CD8-positive, alpha-beta T cell (primary cell): ENCODE measurements at regions of chr9 and their contacts with region 1.

Region 1: DNA sequence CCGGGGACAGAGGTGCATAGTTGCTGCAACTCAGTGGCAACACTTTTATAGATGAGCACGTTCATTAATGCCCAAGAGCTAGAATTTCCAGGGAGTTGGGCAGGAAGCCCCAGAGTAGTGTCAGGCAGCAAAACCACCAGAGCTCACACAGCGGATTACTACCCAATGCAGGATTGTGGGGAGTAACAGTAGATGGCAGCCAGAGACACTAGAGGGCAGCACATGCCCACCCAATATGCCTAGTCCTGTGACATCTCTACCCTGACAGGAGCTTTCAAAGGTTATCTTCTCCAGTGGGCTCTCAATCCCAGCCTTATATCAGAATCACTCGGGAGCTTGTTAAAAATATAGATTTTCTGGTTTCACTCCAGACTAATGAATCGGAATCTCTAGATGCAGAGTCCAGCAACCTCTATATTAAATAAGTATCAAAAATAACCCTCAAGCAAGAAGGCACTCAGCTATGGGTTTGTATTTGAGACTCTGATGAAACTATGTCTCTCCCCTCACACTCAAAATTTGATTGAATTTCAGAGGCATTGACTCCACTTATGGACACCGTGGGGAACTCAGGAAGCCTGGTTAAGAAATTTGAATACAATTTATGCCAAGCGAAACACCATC is 58.4 kb upstream of the PHF24 start:
- DNase-seq: peak; percentile 64 to 87 (median 80)
- ATAC-seq: peak; percentile 99
- H3K4me3 ChIP-seq: no peak overlapping the region
- H3K4me3 Mint-ChIP-seq: no peak overlapping the region
- H3K27ac ChIP-seq: no peak overlapping the region
- H3K27ac Mint-ChIP-seq: no peak overlapping the region
- H3K4me1 ChIP-seq: no peaks in the 10 kb centered on the region
- H3K4me1 Mint-ChIP-seq: no peaks in the 10 kb centered on the region
- H3K27me3 ChIP-seq: no peaks in the 10 kb centered on the region
- H3K27me3 Mint-ChIP-seq: peaks cover 31% of the 10 kb centered on the region
- CTCF ChIP-seq: peak; percentile 81

Region 2: GRCh38 chr9:34957492-34958410 is 58.1 kb after region 1 on chr9 and contains the start of gene PHF24:
- CTCF ChIA-PET with region 1: interaction called, 8 read pairs
- POLR2A ChIA-PET with region 1: no interaction called
- intact Hi-C with region 1: loop called in 1 of 2 experiments (anchors 5 kb)
- DNase-seq: peak in 6 of 9 experiments; percentile 4 to 50 (median 36)
- ATAC-seq: peak; percentile 85
- H3K4me3 ChIP-seq: peak within 1 kb of the TSS in 1 of 2 experiments; percentile 35
- H3K4me3 Mint-ChIP-seq: peak within 1 kb of the TSS; percentile 75
- H3K27ac ChIP-seq: no peak within 1 kb of the TSS
- H3K27ac Mint-ChIP-seq: no peak within 1 kb of the TSS
- H3K4me1 ChIP-seq: peaks cover 4% of the 10 kb centered on the region
- H3K4me1 Mint-ChIP-seq: peaks cover 3% of the 10 kb centered on the region
- H3K27me3 ChIP-seq: peaks cover 12 to 18% of the 10 kb centered on the region in 2 experiments
- H3K27me3 Mint-ChIP-seq: peaks cover 48% of the 10 kb centered on the region
- CTCF ChIP-seq: no peak
- total RNA-seq, gene PHF24: not detected

Region 3: DNA sequence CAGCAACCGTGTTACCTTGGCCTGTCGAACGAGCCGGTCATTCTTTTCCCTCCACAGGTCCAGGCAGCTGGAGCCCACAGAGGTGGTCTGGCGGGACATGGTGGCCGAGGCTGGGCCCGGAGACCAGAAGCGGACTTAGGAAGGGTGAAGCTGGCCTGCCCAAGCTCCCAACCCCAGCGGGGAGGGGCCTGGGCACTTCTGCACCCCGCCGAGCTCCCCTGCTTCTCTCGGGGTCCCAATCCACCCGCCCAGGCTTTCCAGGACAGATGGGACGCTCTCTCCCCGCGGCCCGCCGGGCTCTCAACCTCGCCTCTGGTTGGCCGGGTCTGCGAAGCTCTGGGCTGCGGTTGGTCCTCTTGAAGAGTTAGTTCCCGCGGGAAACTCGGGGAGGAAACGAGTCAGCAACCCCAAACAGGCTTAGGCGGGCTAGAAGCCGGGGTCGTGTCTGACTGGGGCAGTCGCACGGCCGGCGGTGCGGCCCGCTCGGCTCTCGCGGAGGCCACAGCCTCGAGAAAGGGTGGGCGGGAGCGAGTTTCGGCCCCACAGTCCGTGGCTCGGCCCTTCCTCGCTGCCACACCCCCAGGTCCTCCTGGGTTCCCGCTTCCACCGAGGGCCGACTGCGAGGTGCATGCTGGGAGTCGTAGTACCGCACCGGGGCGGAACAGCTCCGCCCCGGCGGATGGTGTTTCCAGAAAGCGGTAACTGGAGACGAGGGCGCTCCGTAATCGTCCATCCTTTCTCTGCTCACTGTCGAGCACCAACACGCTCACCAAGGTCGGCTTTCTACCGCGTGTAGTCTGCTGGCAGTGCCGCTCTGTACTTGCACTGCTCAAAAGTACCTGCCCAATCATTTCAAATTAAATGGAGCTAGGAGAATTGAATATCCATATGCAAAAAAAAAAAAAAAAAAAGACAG is 180.0 kb after region 1 on chr9 and contains the start of gene FANCG:
- CTCF ChIA-PET with region 1: interaction called, 11 read pairs
- POLR2A ChIA-PET with region 1: interaction called, 7 read pairs
- intact Hi-C with region 1: no loop called
- DNase-seq: peak; percentile 30 to 88 (median 73)
- ATAC-seq: peak; percentile 92
- H3K4me3 ChIP-seq: peak within 1 kb of the TSS; percentile 65 to 81
- H3K4me3 Mint-ChIP-seq: peak within 1 kb of the TSS; percentile 92
- H3K27ac ChIP-seq: peak within 1 kb of the TSS; percentile 42 to 49
- H3K27ac Mint-ChIP-seq: peak within 1 kb of the TSS; percentile 84
- H3K4me1 ChIP-seq: peaks cover 15% of the 10 kb centered on the region
- H3K4me1 Mint-ChIP-seq: peaks cover 21% of the 10 kb centered on the region
- H3K27me3 ChIP-seq: no peaks in the 10 kb centered on the region
- H3K27me3 Mint-ChIP-seq: no peaks in the 10 kb centered on the region
- CTCF ChIP-seq: no peak
- total RNA-seq, gene FANCG: 15.2 to 19.4 TPM

Region 4: GRCh38 chr9:35258676-35259474 is 359.2 kb after region 1 on chr9:
- CTCF ChIA-PET with region 1: interaction called, 17 read pairs
- POLR2A ChIA-PET with region 1: no interaction called
- intact Hi-C with region 1: loop called in 1 of 2 experiments (anchors 2 kb)
- DNase-seq: peak in 8 of 9 experiments; percentile 7 to 62 (median 45)
- ATAC-seq: no peak
- H3K4me3 ChIP-seq: no peak overlapping the region
- H3K4me3 Mint-ChIP-seq: no peak overlapping the region
- H3K27ac ChIP-seq: no peak overlapping the region
- H3K27ac Mint-ChIP-seq: no peak overlapping the region
- H3K4me1 ChIP-seq: no peaks in the 10 kb centered on the region
- H3K4me1 Mint-ChIP-seq: no peaks in the 10 kb centered on the region
- H3K27me3 ChIP-seq: no peaks in the 10 kb centered on the region
- H3K27me3 Mint-ChIP-seq: peaks cover 8% of the 10 kb centered on the region
- CTCF ChIP-seq: peak; percentile 57

Region 5: GRCh38 chr9:35553670-35554543 is 654.3 kb after region 1 on chr9:
- CTCF ChIA-PET with region 1: interaction called, 13 read pairs
- POLR2A ChIA-PET with region 1: no interaction called
- intact Hi-C with region 1: loop called in 1 of 2 experiments (anchors 2 kb)
- DNase-seq: peak in 4 of 9 experiments; percentile 18 to 53 (median 31)
- ATAC-seq: peak; percentile 51
- H3K4me3 ChIP-seq: no peak overlapping the region
- H3K4me3 Mint-ChIP-seq: no peak overlapping the region
- H3K27ac ChIP-seq: no peak overlapping the region
- H3K27ac Mint-ChIP-seq: no peak overlapping the region
- H3K4me1 ChIP-seq: no peaks in the 10 kb centered on the region
- H3K4me1 Mint-ChIP-seq: no peaks in the 10 kb centered on the region
- H3K27me3 ChIP-seq: no peaks in the 10 kb centered on the region
- H3K27me3 Mint-ChIP-seq: peaks cover 2% of the 10 kb centered on the region
- CTCF ChIP-seq: peak; percentile 47

Region 6: DNA sequence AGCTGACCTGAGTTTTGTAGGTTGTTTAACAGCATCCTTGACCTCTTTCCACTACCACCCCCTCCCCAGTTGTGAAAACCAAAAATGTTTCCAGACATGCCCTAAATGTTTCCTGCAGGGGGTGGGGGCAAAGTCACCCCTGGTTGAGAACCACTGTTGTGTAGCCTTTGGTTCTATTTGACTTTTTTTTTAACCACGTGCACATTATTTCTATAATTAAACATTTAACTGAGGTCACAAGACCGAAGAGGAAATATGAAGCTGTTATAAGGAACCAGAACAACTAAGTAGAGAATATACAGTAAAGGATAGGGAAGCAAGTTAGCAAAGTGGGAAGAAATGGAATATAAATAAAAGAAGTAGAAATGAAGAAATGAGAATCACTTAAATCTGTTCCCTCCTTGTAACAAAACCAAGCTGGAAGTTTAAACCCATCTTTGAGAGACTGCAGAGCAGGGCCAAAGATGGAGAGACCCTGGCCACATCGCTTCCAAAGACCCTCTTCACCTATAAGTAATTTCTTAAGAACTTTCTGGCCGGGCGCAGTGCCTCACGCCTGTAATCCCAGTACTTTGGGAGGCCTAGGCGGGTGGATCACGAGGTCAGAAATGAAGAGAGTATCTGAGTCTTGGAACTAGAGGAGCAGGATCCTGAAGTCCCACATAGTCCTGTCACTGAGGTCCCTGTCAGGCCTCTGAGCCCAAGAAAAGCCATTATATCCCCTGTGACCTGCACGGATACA is 736.7 kb after region 1 on chr9:
- CTCF ChIA-PET with region 1: no interaction called
- POLR2A ChIA-PET with region 1: no interaction called
- intact Hi-C with region 1: no loop called
- DNase-seq: peak in 1 of 9 experiments; percentile 22
- ATAC-seq: no peak
- H3K4me3 ChIP-seq: no peak overlapping the region
- H3K4me3 Mint-ChIP-seq: no peak overlapping the region
- H3K27ac ChIP-seq: peak overlapping the region in 1 of 2 experiments; percentile 56
- H3K27ac Mint-ChIP-seq: peak overlapping the region; percentile 41
- H3K4me1 ChIP-seq: peaks cover 31% of the 10 kb centered on the region
- H3K4me1 Mint-ChIP-seq: peaks cover 51% of the 10 kb centered on the region
- H3K27me3 ChIP-seq: no peaks in the 10 kb centered on the region
- H3K27me3 Mint-ChIP-seq: no peaks in the 10 kb centered on the region
- CTCF ChIP-seq: no peak